SK-N-SH (cell line): ENCODE measurements at regions of chr2 and their contacts with region 1.

Region 1: DNA sequence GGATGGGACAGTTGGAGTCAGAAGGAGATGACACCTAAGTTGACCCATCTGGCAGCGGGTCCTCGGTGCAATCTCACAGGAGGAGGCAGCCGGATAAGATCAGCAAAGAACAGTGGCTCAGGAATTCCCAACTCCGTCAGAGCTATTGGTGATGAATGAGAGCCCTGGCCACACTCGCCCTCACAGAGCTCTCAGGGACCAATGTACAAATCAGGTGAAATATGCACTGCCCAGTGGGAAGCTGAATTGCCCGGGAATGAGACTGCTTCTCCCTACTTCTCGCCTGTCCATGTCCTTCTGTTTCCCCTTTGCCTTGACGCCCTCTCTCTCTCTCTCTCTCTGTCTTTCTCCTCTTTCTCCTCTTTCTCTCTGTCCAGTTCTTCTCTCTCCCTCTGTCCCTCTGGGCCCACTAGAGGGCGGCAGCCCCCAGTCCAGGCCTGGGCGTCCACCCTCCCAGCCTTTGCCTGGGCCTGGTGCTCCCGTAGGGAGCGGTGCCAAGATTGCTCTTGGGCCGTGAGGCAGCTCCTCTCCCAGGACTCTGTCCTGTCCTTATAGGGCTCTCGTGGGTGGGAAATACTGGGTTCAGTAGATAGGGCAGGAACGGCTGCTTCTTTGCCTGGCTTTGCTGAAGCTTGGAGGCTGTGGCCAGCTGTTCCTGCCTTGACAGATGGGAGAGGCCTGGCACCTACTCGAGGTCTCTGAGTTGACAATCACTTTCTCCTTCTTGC is 28.3 kb upstream of the PUM2 start:
- DNase-seq: peak; percentile 93
- H3K4me3 ChIP-seq: no peak overlapping the region
- H3K27ac ChIP-seq: peak overlapping the region in 1 of 2 experiments; percentile 11; a peak in 1 of 4 replicates
- H3K4me1 ChIP-seq: peaks cover 0 to 16% of the 10 kb centered on the region in 2 experiments; a peak in 1 of 4 replicates
- H3K27me3 ChIP-seq: no peaks in the 10 kb centered on the region; the same call in 1 of the 2 replicates
- CTCF ChIP-seq: peak; percentile 97
- EP300 ChIP-seq: no peak
- RAD21 ChIP-seq: peak; percentile 95

Region 2: DNA sequence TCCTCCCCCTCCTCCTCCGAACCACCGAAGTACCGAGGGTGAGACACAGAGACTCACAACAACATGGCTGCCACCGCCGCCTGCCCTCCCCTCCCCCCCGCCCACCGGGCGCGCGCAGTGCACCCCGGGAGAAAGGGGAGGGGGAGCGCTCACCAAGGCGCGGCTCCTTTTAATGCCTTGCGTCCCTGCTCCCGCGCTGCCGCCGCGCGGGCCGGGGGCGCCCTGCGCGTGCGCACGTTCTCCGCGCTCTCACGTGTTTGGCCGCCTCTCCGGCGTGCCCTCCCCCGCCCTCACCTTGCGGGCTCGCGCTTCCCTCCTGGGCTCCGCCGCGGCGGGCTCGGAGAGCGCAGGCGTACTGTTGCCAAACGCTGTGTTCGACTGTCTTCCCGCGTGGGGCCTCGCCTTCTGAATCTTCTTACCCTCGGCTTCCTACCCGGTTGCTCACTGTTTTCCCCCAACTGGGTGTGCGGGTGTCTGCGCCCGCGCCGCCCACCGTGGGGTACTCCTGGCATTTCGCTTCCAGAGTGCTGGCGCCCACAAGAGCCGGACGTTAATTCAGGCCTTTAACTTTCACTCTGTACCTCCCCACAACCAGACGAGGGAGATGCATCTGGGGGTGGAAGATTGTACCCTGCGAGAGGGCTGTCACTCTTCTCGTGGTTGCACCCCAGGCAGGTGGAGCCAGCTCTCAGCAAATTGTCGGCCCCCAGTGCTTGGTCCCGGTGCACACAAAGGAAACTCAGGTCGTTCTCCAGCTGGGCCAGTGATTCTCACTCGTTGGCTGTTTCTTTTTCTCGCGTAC is 28.0 kb before region 1 on chr2 and contains the start of gene PUM2:
- CTCF ChIA-PET with region 1: interaction called, 67 read pairs
- POLR2A ChIA-PET with region 1: interaction called, 3 read pairs
- DNase-seq: peak; percentile 99
- H3K4me3 ChIP-seq: peak within 1 kb of the TSS; percentile 71 to 86
- H3K27ac ChIP-seq: peak within 1 kb of the TSS; percentile 82 to 99
- H3K4me1 ChIP-seq: peaks cover 11 to 48% of the 10 kb centered on the region in 2 experiments; a peak in 3 of 4 replicates
- H3K27me3 ChIP-seq: no peaks in the 10 kb centered on the region
- CTCF ChIP-seq: no peak
- EP300 ChIP-seq: no peak
- RAD21 ChIP-seq: no peak
- polyA plus RNA-seq, gene PUM2: 19.7 and 29.7 TPM in 2 replicates

Region 3: DNA sequence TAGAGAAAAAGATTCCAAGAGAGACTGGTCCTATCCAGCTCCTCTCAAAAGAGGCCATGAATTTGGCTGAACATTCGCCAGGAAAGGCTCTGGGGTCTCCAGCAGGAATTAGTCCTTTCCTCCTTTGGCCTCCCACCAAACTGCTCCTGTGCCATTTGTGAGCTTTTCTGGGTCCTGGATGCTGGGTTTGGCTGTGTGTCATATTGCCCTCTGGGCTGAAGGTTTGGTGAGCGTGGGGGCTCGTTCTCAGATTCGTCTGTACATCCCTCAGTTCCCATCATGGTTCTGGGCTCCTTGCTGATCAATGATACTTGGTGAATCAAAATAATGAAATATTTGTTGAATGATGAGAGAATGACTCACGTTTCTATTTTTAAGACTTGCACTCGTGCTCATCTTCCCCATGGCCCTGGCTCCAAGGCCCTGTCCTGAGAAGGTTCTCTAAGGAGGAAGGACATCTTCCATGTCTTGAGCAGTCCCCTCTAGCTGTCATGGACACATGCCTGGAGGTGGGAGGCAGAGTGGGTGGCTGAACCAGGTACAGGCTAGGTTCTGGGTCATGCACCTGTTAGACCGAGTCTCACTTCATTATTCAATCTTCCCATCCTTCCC is 20.1 kb after region 1 on chr2:
- CTCF ChIA-PET with region 1: interaction called, 58 read pairs
- POLR2A ChIA-PET with region 1: no interaction called
- DNase-seq: no peak
- H3K4me3 ChIP-seq: no peak overlapping the region
- H3K27ac ChIP-seq: no peak overlapping the region
- H3K4me1 ChIP-seq: no peaks in the 10 kb centered on the region; a peak in 1 of 4 replicates
- H3K27me3 ChIP-seq: no peaks in the 10 kb centered on the region
- CTCF ChIP-seq: no peak
- EP300 ChIP-seq: no peak
- RAD21 ChIP-seq: no peak

Region 4: DNA sequence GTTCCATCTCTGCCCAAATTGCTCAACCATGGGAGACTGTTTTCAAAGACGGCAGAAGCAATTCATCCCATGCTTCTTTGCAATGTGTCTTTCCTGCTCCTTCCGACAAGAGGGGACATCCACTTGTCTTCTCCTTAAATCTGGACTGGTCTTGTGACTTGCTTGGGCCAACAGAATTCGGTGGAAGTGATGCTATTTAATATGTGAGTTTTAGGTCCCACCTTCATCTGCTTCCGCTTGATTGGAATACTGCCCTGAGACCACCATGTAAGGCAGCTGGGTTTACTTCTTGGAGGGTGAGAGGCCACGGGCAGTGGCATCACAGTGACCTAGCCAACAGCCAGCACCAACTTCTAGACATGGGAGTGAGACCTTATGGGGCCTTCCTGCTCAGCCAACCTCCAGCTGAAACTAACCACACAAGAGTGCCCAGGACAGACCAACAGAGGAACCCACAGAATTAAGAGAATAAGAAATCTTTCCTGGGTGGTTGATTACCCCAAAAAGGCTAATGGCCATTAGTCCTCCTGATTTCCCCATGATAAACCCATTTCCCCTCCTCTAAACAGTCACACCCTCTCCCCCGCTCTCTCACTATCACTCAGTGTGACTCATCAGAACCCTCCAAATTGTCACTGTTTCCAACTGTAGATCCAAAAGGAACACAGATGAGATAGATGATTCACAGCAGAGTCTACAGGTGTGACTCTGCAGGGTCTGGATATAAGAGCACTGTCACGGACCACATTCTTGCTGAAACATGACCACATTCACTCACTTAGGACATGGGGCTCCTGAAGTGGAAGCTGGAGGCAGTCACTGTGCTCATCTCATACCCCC is 51.7 kb after region 1 on chr2:
- CTCF ChIA-PET with region 1: interaction called, 87 read pairs
- POLR2A ChIA-PET with region 1: no interaction called
- DNase-seq: no peak
- H3K4me3 ChIP-seq: no peak overlapping the region
- H3K27ac ChIP-seq: no peak overlapping the region
- H3K4me1 ChIP-seq: peaks cover 2 to 3% of the 10 kb centered on the region in 2 experiments; a peak in 3 of 4 replicates
- H3K27me3 ChIP-seq: peaks cover 15% of the 10 kb centered on the region; the same call in 1 of the 2 replicates
- CTCF ChIP-seq: no peak
- EP300 ChIP-seq: no peak
- RAD21 ChIP-seq: no peak

Region 5: GRCh38 chr2:20483194-20483895 is 104.4 kb after region 1 on chr2:
- CTCF ChIA-PET with region 1: no interaction called
- POLR2A ChIA-PET with region 1: no interaction called
- DNase-seq: no peak
- H3K4me3 ChIP-seq: no peak overlapping the region
- H3K27ac ChIP-seq: no peak overlapping the region
- H3K4me1 ChIP-seq: peaks cover 0 to 29% of the 10 kb centered on the region in 2 experiments; a peak in 2 of 4 replicates
- H3K27me3 ChIP-seq: no peaks in the 10 kb centered on the region
- CTCF ChIP-seq: no peak
- EP300 ChIP-seq: no peak
- RAD21 ChIP-seq: no peak

Region 6: DNA sequence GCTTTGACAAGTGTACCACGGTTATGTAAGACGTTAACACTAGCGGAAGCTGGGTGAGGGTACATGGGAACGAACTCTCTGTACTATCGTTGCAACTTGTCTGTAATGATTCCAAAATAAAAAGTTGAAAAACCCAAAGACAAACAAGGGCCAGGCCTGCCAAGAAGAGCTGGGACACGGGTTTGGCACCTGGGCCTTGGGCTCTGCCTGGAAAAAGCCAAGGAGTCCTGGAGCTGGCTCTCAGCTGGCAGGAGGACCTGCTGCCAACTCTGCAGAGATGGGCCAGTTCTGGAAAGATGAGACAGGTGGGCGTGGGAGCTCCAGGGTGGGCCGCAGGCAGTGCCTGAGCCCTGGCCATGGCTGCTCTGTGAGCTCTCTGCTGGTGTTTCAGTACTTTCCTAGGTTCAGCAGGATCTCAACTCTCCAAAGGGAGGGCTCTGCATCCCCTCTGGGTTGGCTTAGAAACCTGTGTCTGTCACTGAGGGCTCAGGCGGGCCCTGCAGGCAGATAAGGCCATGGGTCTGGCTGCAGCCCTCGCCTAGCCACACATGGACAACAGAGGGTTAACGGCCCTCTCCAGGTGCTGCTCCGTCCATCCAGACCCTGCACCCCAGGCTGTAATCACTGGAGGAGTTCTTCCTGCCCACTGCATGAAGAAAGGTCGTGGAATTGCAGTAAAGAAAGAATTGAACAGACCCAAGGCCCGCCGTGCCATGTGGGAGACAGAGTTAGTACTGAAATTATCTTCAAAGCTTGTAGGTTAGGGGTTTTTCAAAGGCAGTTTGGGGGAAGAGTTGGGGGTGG is 157.9 kb after region 1 on chr2:
- CTCF ChIA-PET with region 1: no interaction called
- POLR2A ChIA-PET with region 1: no interaction called
- DNase-seq: no peak
- H3K4me3 ChIP-seq: no peak overlapping the region
- H3K27ac ChIP-seq: no peak overlapping the region
- H3K4me1 ChIP-seq: peaks cover 0 to 25% of the 10 kb centered on the region in 2 experiments; a peak in 1 of 4 replicates
- H3K27me3 ChIP-seq: no peaks in the 10 kb centered on the region
- CTCF ChIP-seq: no peak
- EP300 ChIP-seq: no peak
- RAD21 ChIP-seq: no peak

Region 7: GRCh38 chr2:20617892-20618467 is 239.0 kb after region 1 on chr2:
- CTCF ChIA-PET with region 1: interaction called, 10 read pairs
- POLR2A ChIA-PET with region 1: no interaction called
- DNase-seq: peak; percentile 82
- H3K4me3 ChIP-seq: no peak overlapping the region
- H3K27ac ChIP-seq: peak overlapping the region; percentile 67 to 90
- H3K4me1 ChIP-seq: peaks cover 18 to 42% of the 10 kb centered on the region in 2 experiments; a peak in 3 of 4 replicates
- H3K27me3 ChIP-seq: no peaks in the 10 kb centered on the region
- CTCF ChIP-seq: peak; percentile 56
- EP300 ChIP-seq: no peak; a peak in 1 of 4 replicates
- RAD21 ChIP-seq: peak; percentile 23; the same call in 1 of the 2 replicates